ENCODE measurements at regions of chr11 and their contacts with region 1.

Region 1: GRCh38 chr11:14789879-14790484 is 102.0 kb downstream of the CYP2R1 start:
- H3K4me3 Mint-ChIP-seq: no peak overlapping the region
- H3K27ac Mint-ChIP-seq: no peak overlapping the region
- H3K4me1 Mint-ChIP-seq: no peaks in the 10 kb centered on the region
- H3K27me3 Mint-ChIP-seq: no peaks in the 10 kb centered on the region

Region 2: DNA sequence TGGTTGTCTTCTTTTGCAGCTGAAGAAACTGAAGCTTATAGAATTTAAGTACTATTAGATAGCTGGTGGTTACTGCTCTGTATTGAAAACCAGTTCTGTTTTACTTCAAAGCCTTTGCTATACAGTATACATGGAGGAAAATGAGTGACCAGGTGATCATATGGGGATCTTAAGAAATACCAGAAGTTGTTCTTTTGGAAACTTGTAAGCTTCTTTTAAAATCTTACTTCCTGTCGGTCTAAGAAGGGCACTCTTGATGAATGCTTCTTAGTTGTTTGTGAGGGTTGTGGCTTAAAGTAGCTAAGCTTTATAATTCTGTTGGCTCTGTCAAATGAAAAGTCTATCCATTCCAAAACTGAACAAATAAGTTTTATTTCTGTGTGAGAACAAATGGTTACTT is 91.2 kb before region 1 on chr11:
- intact Hi-C with region 1: no loop called
- H3K4me3 Mint-ChIP-seq: no peak overlapping the region
- H3K27ac Mint-ChIP-seq: no peak overlapping the region
- H3K4me1 Mint-ChIP-seq: peaks cover 10% of the 10 kb centered on the region
- H3K27me3 Mint-ChIP-seq: no peaks in the 10 kb centered on the region

Region 3: DNA sequence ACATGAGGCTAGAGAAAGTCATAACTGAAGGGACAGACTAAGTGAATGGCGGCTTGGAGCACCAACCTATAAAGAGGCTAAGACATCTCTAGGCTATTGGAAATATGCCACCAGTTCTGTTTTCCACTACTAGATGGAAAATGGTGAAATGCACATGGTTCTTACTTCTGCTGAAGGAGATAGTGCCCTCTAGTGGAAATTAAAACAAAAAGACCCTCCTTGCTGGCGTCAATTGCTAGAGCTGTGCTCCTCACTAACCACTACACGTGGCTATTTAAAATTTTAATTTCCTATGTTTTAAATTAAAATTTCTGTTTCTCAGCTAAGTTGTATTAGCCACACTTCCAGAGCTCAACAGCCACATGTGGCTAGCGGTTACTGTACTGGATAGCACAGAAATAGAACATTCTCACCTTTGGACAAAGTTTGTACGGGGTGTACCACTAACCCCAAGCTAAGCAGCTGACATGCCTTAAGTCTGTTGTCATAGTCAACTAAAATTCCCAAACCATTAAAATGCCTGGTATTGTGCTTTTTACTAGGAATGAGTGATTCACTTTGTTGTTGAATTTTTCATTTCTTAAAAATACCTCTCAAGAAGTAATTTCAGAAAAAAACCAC is 216.3 kb after region 1 on chr11:
- intact Hi-C with region 1: loop called (anchors 1 kb)
- H3K4me3 Mint-ChIP-seq: no peak overlapping the region
- H3K27ac Mint-ChIP-seq: no peak overlapping the region
- H3K4me1 Mint-ChIP-seq: no peaks in the 10 kb centered on the region
- H3K27me3 Mint-ChIP-seq: peaks cover 8% of the 10 kb centered on the region

Region 4: GRCh38 chr11:15074206-15075161 is 284.5 kb after region 1 on chr11:
- intact Hi-C with region 1: loop called (anchors 5 kb)
- H3K4me3 Mint-ChIP-seq: no peak overlapping the region
- H3K27ac Mint-ChIP-seq: no peak overlapping the region
- H3K4me1 Mint-ChIP-seq: peaks cover 19% of the 10 kb centered on the region
- H3K27me3 Mint-ChIP-seq: peaks cover 34% of the 10 kb centered on the region

Measured in dendritic cell treated with granulocyte-macrophage colony-stimulating factor and Interleukin-4, amounts not matched to agents 40 ng/mL and 50 ng/mL, for 4 days (primary cell).